ENCODE measurements at regions of chr9 and their contacts with region 1.

Region 1: GRCh38 chr9:89597711-89598625 is 6.8 kb upstream of the GADD45G start:
- DNase-seq: peak; percentile 75
- H3K4me3 Mint-ChIP-seq: no peak overlapping the region
- H3K27ac Mint-ChIP-seq: no peak overlapping the region
- H3K4me1 Mint-ChIP-seq: peaks cover under 1% of the 10 kb centered on the region
- H3K27me3 Mint-ChIP-seq: peaks cover 55% of the 10 kb centered on the region

Region 2: GRCh38 chr9:88835038-88835466 is 762.9 kb before region 1 on chr9:
- CTCF ChIA-PET with region 1: no interaction called
- DNase-seq: no peak
- H3K4me3 Mint-ChIP-seq: no peak overlapping the region
- H3K27ac Mint-ChIP-seq: no peak overlapping the region
- H3K4me1 Mint-ChIP-seq: peaks cover 14% of the 10 kb centered on the region
- H3K27me3 Mint-ChIP-seq: peaks cover 73% of the 10 kb centered on the region

Region 3: GRCh38 chr9:89466451-89467277 is 131.3 kb before region 1 on chr9:
- CTCF ChIA-PET with region 1: no interaction called
- DNase-seq: no peak
- H3K4me3 Mint-ChIP-seq: peak overlapping the region; percentile 16
- H3K27ac Mint-ChIP-seq: peak overlapping the region; percentile 83
- H3K4me1 Mint-ChIP-seq: peaks cover 99% of the 10 kb centered on the region
- H3K27me3 Mint-ChIP-seq: no peaks in the 10 kb centered on the region

Region 4: GRCh38 chr9:89576404-89576839 is 21.5 kb before region 1 on chr9:
- CTCF ChIA-PET with region 1: interaction called, 15 read pairs
- DNase-seq: no peak
- H3K4me3 Mint-ChIP-seq: no peak overlapping the region
- H3K27ac Mint-ChIP-seq: no peak overlapping the region
- H3K4me1 Mint-ChIP-seq: peaks cover 24% of the 10 kb centered on the region
- H3K27me3 Mint-ChIP-seq: peaks cover 62% of the 10 kb centered on the region

Region 5: GRCh38 chr9:89919169-89919681 is 321.3 kb after region 1 on chr9:
- CTCF ChIA-PET with region 1: interaction called, 93 read pairs
- DNase-seq: peak; percentile 64
- H3K4me3 Mint-ChIP-seq: no peak overlapping the region
- H3K27ac Mint-ChIP-seq: peak overlapping the region; percentile 8
- H3K4me1 Mint-ChIP-seq: peaks cover 12% of the 10 kb centered on the region
- H3K27me3 Mint-ChIP-seq: peaks cover 55% of the 10 kb centered on the region

Region 6: GRCh38 chr9:89999534-90000370 is 401.8 kb after region 1 on chr9:
- CTCF ChIA-PET with region 1: interaction called, 33 read pairs
- DNase-seq: peak; percentile 85
- H3K4me3 Mint-ChIP-seq: peak overlapping the region; percentile 70
- H3K27ac Mint-ChIP-seq: peak overlapping the region; percentile 93
- H3K4me1 Mint-ChIP-seq: peaks cover 27% of the 10 kb centered on the region
- H3K27me3 Mint-ChIP-seq: peaks cover 13% of the 10 kb centered on the region

Region 7: GRCh38 chr9:90095682-90096081 is 497.7 kb after region 1 on chr9:
- CTCF ChIA-PET with region 1: interaction called, 171 read pairs
- DNase-seq: no peak
- H3K4me3 Mint-ChIP-seq: no peak overlapping the region
- H3K27ac Mint-ChIP-seq: no peak overlapping the region
- H3K4me1 Mint-ChIP-seq: peaks cover 20% of the 10 kb centered on the region
- H3K27me3 Mint-ChIP-seq: peaks cover 40% of the 10 kb centered on the region

Region 8: DNA sequence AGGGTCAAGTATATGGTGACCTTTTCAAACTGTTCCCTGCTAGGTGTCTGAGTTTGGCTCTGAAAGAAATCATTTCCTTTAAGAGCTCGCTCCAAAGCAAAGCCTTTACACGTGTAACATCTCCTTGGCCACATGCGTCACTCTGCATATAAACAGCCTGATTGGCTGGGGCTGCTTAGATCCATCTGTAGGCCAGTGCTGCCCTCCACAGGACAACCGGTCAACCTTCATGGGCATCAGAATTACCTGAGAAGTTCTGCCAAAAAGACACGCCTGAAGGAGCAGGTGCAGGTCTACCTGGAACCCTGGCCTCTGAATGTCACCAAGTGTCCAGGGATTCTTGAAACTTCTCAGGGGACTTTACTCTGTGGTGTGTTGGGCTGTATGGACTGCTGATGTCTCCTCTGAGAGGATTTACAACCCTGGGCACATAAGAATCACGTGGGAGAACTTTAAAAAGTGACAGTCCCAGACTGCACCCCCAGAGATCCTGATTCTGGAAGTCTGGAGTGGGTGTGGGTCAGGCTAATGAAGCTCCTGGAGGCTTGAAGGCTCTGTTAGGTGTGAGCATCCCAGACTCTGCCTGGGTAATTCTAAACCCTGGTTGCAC is 504.4 kb after region 1 on chr9:
- CTCF ChIA-PET with region 1: interaction called, 171 read pairs
- DNase-seq: peak; percentile 87
- H3K4me3 Mint-ChIP-seq: no peak overlapping the region
- H3K27ac Mint-ChIP-seq: no peak overlapping the region
- H3K4me1 Mint-ChIP-seq: peaks cover 9% of the 10 kb centered on the region
- H3K27me3 Mint-ChIP-seq: peaks cover 14% of the 10 kb centered on the region

Measured in activated naive CD4-positive, alpha-beta T cell treated with anti-CD3 and anti-CD28 coated beads, Interleukin-2, amount 10 ng/mL, durations not matched to agents 7 days and 5 days (primary cell).